ENCODE measurements at regions of chr16 and their contacts with region 1.

Region 1: DNA sequence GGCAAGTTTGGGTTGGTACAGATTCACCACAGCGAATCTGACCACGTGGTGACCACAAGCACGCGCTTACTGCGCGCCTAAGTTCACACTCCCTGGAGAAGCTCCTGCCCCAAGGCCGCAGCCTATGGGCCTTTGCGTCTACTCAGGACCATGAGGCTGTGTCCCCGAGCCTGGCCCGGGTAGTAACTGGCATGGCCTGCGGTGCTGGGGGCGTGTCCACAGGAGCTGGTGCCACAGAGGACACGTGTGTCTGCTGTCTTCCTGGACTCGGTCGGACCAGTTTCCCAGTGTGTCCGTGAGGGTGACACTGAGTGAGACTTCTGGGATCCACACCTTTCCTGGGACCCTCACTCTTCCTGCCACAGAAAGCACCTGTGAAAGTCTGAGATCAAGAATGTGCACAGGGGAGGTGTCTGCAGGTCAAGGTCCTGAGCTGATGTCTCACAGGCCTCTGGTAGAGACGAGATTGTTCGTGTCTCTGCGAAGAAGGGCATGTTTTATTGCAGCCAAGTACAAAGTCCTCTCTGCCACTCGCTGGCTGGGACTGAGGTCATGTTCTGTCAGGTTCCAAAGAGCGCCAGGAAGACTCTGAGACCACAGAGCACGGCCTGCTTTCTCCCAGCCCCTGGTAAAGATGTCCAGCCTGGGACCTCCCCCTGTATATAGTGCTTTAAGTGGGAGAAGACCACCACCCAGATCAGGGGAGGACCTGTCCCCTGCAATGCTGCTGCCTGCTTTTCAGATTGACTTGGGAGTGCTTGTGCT is 25.2 kb upstream of the CAPN15 start:
- DNase-seq: no peak
- H3K4me3 ChIP-seq: no peak overlapping the region
- H3K27ac ChIP-seq: no peak overlapping the region
- H3K4me1 ChIP-seq: no peaks in the 10 kb centered on the region; a peak in 1 of 7 replicates
- H3K27me3 ChIP-seq: no peaks in the 10 kb centered on the region
- CTCF ChIP-seq: no peak
- EP300 ChIP-seq: no peak
- POLR2A ChIP-seq: no peak
- RAD21 ChIP-seq: no peak

Region 2: DNA sequence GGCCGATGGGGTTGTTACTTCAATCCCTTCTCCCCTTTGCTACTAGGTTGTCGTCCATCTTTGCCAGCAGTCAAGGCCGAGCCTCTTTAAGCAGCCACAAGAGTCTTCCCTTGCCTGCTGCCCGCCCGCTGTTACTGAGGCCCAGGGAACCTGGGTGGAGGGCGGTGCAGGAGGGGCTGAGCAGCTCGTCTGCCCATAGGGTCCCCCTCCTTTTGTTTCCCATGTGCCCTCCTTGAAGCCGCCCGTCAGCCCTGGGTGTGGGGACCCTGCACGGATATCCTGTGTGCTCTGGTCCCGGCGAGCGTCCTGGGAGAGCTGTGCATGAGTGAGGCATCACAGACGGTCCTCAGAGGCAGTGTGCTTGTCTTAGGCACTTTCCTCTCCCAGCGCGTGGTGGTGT is 12.8 kb before region 1 on chr16:
- CTCF ChIA-PET with region 1: interaction called, 19 read pairs
- POLR2A ChIA-PET with region 1: interaction called, 3 read pairs
- DNase-seq: no peak
- H3K4me3 ChIP-seq: no peak overlapping the region
- H3K27ac ChIP-seq: no peak overlapping the region
- H3K4me1 ChIP-seq: peaks cover 6 to 9% (median 7%) of the 10 kb centered on the region in 4 experiments
- H3K27me3 ChIP-seq: no peaks in the 10 kb centered on the region
- CTCF ChIP-seq: no peak
- EP300 ChIP-seq: no peak
- POLR2A ChIP-seq: no peak
- RAD21 ChIP-seq: no peak

Measured in H1 (cell line).